ENCODE measurements at regions of chr4 and their contacts with region 1.

Region 1: GRCh38 chr4:48269861-48270522 is 354 bp upstream of the TEC start:
- DNase-seq: peak; percentile 98
- ATAC-seq: peak; percentile 98

Region 2: DNA sequence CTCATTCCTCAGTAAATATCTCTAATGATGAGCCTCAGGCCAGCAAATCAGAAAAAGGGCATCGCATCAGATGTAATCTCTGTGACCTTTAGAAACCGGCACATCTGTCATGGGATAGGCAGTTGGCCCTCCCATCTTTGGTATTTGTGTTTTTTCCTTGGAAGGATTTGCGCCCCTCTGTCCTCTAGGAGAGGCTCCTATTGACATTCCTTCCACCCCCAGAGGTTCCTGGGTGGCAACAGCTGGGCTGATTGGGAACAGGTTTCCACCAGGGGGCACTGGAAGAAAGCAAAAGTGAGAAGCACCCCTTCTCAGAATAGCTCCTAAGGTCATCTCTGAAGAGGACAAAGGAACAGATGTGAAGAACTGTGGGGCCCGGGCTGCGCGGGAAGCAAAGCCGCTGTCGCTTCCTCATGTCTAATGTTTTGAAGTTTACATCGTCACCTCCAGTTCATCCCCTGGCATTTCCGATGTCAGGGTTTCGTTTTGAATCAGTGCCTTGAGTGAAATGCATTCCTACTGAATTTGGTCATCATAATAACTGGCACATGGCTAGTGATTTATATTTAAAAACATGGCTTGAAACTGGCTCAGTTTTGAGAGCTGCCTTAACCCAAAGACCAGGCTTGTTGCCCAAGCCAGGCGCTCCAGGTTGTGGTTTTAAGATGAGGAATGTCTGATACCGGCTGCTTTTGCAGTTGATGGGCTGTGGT is 142.2 kb before region 1 on chr4:
- intact Hi-C with region 1: loop called (anchors 5 kb)
- DNase-seq: peak; percentile 59
- ATAC-seq: peak; percentile 86

Region 3: GRCh38 chr4:48340965-48341775 is 71.2 kb after region 1 on chr4 and contains the start of gene SLAIN2:
- intact Hi-C with region 1: loop called (anchors 2 kb)
- DNase-seq: peak; percentile 100
- ATAC-seq: peak; percentile 99
- total RNA-seq, gene SLAIN2: 116 TPM